ENCODE measurements at regions of chr22 and their contacts with region 1.

Region 1: GRCh38 chr22:49917974-49918910 is at the starts of genes ALG12 and CRELD2:
- DNase-seq: peak; percentile 90
- H3K4me3 ChIP-seq: peak within 1 kb of the TSS; percentile 86
- CTCF ChIP-seq: no peak

Region 2: DNA sequence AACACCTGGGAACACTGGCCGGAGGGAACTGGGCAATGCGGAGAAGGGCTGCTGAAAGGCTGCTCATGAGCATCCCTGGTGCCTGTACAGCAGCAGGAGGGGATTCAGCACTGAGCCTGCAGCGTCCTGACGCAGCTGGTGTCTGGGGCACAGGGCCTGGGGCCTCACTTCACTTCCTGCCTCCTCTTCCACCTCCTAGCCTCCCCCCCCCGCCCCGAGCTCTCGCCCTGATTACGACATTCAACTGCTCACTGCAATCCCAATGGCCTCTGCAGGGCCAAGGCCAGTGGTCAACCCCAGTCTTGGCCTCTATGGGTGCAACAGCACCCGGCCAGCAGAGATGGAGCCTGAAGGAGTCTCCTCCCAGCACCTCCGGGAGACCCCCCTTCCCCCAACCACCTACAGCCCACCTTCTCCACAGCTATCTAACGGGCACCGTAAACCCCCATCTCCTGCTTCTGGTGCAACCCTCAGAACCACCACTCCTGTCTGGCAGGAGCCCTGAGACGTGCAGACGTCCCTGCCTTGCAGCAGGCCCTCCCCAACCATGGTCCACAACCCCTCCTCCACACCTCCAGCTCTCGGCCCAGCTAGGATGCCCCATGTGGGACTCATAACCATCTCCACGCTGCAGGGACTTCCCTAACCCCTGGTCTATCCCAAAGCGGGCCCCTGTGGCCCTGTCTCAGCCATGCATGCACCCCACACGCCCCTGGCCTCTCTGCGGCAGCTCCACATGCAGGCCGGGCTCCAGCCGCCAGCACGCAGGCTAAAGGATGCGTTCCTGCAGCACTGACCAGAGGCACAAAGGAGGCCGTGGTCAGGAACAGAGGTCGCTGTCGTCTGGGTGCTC is 128.7 kb before region 1 on chr22:
- in situ Hi-C with region 1: loop called (anchors 25 kb)
- DNase-seq: no peak
- H3K4me3 ChIP-seq: no peak overlapping the region
- CTCF ChIP-seq: no peak

Region 3: GRCh38 chr22:49869845-49870712 is 48.2 kb before region 1 on chr22:
- in situ Hi-C with region 1: loop called (anchors 5 kb)
- DNase-seq: no peak
- H3K4me3 ChIP-seq: no peak overlapping the region
- CTCF ChIP-seq: no peak

Measured in astrocyte of the cerebellum (primary cell).